Activated B cell treated with CpG ODN at 0.5 μM for 24 hours (primary cell): ENCODE measurements at regions of chr3 and their contacts with region 1.

Region 1: DNA sequence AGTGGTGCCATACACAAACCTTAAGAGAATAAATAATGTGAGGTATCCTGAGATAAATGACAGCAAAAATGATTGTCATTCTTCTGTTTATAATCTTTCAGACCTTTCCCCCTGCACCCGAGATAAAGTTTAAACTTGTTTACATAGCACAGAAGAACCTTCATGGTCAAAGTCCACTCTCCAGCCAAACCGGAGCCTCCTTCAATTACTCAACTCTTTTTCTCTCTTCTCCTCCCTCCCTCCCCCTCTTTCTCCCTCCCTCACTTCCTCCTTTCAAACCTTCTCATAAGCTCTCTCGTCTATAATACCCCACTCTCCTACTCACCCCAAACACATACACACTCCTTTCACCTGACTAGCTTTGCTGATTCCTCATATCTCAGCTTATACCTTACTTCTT is 198.9 kb downstream of the EFHB start:
- DNase-seq: no peak
- ATAC-seq: no peak
- H3K4me3 Mint-ChIP-seq: no peak overlapping the region
- H3K27ac Mint-ChIP-seq: no peak overlapping the region
- H3K4me1 Mint-ChIP-seq: no peaks in the 10 kb centered on the region
- H3K27me3 Mint-ChIP-seq: peaks cover 2% of the 10 kb centered on the region
- CTCF ChIP-seq: no peak

Region 2: DNA sequence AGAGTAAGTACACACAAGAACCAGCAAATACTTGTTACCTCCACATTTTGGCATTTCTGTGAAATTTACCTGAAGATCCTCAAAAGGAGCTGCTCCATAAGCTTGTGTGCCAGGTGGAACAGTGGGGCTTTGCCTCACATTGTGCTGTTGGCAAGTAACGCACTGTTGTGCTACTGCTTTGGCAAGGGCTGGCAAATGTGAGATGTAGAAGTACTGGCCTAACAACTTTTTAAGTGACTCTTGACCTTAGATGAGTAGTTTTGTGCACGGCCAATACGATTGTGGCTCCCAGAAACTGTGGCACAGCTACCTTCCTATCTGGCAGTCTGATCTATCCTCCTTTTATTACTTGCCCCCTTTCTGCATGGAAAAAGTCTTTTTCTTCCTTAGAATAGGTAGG is 249.8 kb before region 1 on chr3:
- CTCF ChIA-PET with region 1: no interaction called
- POLR2A ChIA-PET with region 1: no interaction called
- intact Hi-C with region 1: no loop called
- DNase-seq: no peak
- ATAC-seq: no peak
- H3K4me3 Mint-ChIP-seq: no peak overlapping the region
- H3K27ac Mint-ChIP-seq: no peak overlapping the region
- H3K4me1 Mint-ChIP-seq: peaks cover 10% of the 10 kb centered on the region
- H3K27me3 Mint-ChIP-seq: no peaks in the 10 kb centered on the region
- CTCF ChIP-seq: no peak

Region 3: DNA sequence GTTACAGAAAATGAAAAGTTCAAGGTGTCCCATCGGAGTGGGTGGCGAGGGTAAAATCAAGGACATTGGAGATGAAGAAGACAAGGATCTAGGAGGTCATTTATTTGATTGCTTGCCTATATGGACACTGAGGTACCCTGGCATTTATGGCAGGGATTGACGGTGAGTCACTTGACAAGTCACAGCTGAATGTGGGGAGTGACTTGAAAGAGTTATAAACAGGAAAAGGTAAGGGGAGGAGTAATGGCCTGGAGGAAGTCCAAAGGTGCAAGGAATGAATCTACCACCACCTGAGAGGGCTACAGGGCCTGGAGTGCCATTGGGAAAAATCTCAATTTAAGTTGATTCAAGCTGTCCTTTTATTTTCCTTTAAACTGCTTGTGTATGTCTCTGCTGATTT is 462.7 kb after region 1 on chr3:
- CTCF ChIA-PET with region 1: no interaction called
- POLR2A ChIA-PET with region 1: no interaction called
- intact Hi-C with region 1: no loop called
- DNase-seq: no peak
- ATAC-seq: no peak
- H3K4me3 Mint-ChIP-seq: no peak overlapping the region
- H3K27ac Mint-ChIP-seq: no peak overlapping the region
- H3K4me1 Mint-ChIP-seq: peaks cover 2% of the 10 kb centered on the region
- H3K27me3 Mint-ChIP-seq: no peaks in the 10 kb centered on the region
- CTCF ChIP-seq: no peak

Region 4: GRCh38 chr3:20232906-20233780 is 498.0 kb after region 1 on chr3:
- CTCF ChIA-PET with region 1: no interaction called
- POLR2A ChIA-PET with region 1: no interaction called
- intact Hi-C with region 1: loop called (anchors 10 kb)
- DNase-seq: no peak
- ATAC-seq: no peak
- H3K4me3 Mint-ChIP-seq: no peak overlapping the region
- H3K27ac Mint-ChIP-seq: no peak overlapping the region
- H3K4me1 Mint-ChIP-seq: no peaks in the 10 kb centered on the region
- H3K27me3 Mint-ChIP-seq: no peaks in the 10 kb centered on the region
- CTCF ChIP-seq: no peak